Common myeloid progenitor, CD34-positive (primary cell): ENCODE measurements at regions of chr2 and their contacts with region 1.

Region 1: DNA sequence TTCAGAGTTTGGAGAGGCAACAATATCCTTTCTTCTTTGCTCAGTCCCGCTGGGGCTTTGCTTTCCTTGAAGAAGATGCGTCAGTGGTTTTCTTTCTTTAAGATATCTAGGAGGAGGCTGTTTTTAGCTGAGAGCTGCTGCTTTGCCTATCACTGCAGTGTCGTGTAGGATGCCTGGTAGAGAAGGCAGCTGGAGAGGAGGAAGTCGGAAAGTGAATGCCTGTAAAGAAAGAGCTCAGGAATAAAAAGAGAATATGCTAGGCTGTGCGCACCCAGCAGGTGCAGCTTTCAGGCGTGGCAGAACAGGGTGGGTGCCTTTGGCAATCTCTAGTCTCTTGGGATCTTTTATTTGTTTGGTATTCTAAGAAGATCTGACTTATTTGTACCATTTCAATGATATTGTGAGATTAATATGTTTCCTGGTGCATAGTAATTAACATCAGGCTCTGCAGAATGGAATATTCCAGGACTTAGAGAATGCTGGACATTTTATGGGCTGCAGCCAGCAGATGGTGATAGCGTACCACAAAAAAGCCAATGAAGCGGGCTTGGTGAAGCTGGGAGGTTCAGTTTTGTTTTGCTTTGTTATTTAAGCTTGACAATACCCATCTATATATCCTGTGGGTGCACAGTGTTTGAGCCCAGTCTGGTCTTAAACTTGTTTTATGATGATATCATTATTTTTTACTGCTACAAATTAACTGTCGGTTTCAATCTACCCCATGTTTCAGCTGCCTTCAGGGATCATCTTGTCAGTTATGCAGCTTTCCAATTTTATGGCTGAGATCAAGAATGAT is 34.9 kb downstream of the CAVIN2 start:
- DNase-seq: peak; percentile 66 to 85 (median 76)
- H3K4me3 ChIP-seq: no peak overlapping the region
- H3K27ac ChIP-seq: no peak overlapping the region
- H3K4me1 ChIP-seq: peaks cover 0 to 3% (median 0%) of the 10 kb centered on the region in 4 experiments
- H3K27me3 ChIP-seq: no peaks in the 10 kb centered on the region

Region 2: DNA sequence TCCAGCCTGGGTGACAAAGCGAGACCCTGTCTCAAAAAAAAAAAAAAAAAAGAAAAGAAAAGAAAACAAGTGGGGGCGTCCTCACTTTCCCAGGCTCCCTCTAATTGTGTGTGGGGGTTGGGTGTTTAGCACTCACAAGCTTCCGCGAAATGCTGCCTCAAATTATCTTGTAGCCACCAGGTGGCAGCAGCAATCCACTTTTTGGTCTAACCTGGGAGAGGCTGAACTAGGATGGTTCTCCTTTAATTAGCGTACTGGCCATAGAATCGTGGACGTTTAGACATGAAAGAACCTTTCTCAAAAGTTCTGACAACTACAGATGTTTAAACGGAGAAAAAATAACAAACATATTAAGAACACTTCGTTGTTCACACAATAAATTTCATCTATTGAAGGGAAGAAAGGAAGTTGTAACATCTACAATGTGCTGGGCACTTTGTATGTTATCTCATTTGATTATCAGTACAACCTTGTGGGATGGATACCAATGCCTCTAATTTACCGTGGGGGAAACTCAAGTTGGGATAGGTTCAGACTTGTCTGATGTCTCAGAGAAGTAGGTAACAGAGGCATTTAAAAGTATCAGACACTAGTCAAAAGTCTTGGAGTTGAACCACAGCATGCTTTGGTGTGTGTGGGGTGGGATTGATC is 256.8 kb before region 1 on chr2:
- CTCF ChIA-PET with region 1: interaction called, 12 read pairs
- POLR2A ChIA-PET with region 1: no interaction called
- DNase-seq: peak; percentile 81 to 89 (median 83)
- H3K4me3 ChIP-seq: peak overlapping the region in 1 of 7 experiments; percentile 57
- H3K27ac ChIP-seq: no peak overlapping the region
- H3K4me1 ChIP-seq: peaks cover 0 to 3% (median 1%) of the 10 kb centered on the region in 4 experiments
- H3K27me3 ChIP-seq: no peaks in the 10 kb centered on the region

Region 3: GRCh38 chr2:191625016-191625415 is 187.0 kb before region 1 on chr2:
- CTCF ChIA-PET with region 1: no interaction called
- POLR2A ChIA-PET with region 1: no interaction called
- DNase-seq: peak; percentile 12 to 66 (median 51)
- H3K4me3 ChIP-seq: no peak overlapping the region
- H3K27ac ChIP-seq: no peak overlapping the region
- H3K4me1 ChIP-seq: peaks cover 6 to 36% (median 19%) of the 10 kb centered on the region in 4 experiments
- H3K27me3 ChIP-seq: no peaks in the 10 kb centered on the region

Region 4: DNA sequence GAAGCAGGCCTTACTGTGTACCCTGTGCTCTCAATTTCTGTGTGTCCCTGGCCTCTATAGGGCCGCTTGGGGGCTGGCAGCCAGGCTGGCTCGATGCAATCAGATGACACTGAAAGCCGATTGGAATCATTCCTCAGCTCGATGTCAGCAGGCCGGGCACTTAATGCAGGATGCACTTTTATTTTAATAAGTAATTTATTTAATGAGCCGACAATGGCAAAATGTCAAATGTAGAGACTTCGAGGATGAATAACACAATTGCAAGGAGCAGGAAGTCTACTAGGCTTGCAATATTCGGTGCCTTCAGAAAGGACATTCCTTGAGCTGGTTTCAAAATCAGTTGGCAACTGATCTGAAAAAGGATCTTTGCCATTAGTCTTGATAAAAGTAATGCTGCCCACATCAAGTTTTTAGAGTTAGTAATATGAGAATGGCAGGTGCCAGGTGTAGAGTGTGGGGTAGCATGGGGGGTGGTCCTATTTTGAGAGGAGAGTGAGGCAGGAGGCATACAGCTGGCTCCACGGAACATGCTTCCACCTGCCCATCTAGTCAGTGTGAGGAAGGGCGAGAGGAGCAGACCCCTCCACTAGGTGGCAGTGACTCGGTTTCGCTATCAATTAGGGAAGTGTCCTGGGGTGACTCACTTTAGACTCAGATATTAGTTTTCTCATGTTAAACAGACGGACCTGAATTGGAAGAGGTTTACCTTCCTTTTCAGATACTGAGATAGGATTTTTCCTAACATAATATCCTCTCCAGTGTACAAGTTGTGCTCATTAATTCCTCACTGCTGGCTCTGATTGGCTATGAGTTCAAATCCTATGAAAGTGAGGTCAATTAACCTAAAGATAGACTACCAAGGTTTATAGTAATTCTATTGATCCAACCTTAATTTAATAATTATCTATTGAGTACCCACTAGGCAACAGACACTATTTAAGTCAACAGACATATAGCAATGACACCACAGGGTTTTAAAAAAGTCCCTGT is 53.2 kb before region 1 on chr2:
- CTCF ChIA-PET with region 1: interaction called, 12 read pairs
- POLR2A ChIA-PET with region 1: no interaction called
- DNase-seq: peak; percentile 82 to 90 (median 89)
- H3K4me3 ChIP-seq: peak overlapping the region in 1 of 7 experiments; percentile 14
- H3K27ac ChIP-seq: no peak overlapping the region
- H3K4me1 ChIP-seq: no peaks in the 10 kb centered on the region
- H3K27me3 ChIP-seq: no peaks in the 10 kb centered on the region

Region 5: GRCh38 chr2:191800874-191801273 is 11.1 kb before region 1 on chr2:
- CTCF ChIA-PET with region 1: interaction called, 18 read pairs
- POLR2A ChIA-PET with region 1: no interaction called
- DNase-seq: no peak
- H3K4me3 ChIP-seq: no peak overlapping the region
- H3K27ac ChIP-seq: no peak overlapping the region
- H3K4me1 ChIP-seq: no peaks in the 10 kb centered on the region
- H3K27me3 ChIP-seq: no peaks in the 10 kb centered on the region

Region 6: DNA sequence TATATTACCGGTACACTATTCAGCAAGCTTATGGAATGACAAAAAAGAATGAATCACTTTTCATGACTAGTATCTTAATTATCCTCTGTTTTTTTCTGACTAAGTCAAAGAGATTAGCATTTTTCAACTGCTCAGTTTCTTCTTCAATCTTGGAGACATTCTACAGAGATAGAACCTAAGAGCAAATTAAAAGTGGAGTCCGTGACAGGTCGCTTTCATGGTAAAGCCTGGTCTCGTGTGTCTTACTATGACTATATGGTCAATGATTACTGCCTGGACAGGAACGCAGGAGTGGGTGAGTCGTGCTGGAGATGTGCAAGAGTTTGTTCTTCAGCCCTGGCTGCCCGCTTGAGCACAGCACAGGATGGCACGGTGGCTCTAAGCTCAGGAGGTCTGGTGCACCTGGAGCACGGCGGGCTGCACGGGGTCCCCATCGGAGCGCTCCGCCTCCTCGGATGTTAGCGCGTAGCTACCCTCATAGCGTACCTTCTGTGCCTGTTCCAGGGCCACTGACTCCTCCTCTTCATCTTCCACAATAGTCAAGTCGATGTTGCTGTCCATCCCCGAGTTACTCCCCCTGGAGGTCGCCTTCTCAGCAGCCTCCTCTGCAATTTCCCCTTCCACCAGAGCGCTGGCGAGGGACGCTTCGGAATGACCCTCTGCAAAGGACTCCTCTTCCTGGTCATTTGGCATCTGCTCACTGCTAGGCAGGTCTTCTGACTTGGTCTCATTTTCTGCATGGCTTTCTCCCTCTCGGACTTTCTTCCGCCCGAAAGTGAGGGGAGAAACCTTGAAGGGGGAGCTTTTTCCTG is 23.7 kb after region 1 on chr2:
- CTCF ChIA-PET with region 1: interaction called, 14 read pairs
- POLR2A ChIA-PET with region 1: no interaction called
- DNase-seq: no peak
- H3K4me3 ChIP-seq: no peak overlapping the region
- H3K27ac ChIP-seq: peak overlapping the region in 1 of 2 experiments; percentile 86
- H3K4me1 ChIP-seq: peaks cover 13 to 58% (median 37%) of the 10 kb centered on the region in 4 experiments
- H3K27me3 ChIP-seq: no peaks in the 10 kb centered on the region

Region 7: DNA sequence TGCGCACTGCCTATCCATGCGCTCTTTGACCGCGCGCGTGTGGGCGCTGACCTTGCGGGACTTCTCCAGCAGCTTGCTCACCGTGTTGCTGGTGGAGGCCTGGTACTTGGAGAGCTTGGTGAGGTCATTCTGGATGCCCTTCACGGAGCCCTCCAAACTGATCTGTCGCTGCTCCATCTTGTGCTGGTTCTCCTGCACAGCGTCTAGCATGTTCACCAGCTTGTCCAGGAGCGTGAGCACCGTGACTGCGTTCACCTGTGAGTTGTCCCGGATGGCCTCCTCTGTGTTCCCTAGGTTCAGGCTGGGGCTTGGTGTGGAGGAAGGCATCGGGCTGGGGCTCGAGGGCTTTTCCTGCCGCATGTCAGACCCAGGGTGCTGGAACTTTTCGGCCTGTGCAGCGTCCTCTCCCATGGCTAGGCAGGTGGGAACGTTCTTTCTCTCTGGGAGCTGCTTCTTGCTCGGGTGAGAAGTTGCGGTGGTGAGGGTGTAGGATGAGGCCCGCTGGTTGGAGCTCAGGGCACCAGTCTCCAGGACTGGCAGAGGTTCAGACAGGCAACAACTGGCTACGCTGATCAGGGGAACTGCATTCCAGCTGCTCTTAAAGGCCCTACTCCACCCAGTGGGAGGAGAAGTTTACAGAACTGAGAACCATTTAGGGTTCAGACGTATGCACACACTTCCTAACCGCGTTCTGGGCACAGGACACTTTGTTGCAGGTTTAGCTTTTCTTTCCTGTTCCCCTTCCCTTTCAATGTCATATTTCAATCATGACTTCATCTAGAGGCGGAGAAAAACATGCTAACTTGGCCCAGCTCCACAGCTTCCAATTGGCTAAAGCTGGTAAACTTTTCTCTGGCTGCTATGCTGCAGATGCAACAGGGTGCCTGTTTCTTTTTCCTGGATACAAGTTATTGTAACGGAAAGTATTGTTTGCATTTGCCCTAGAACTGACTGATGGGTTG is 34.8 kb after region 1 on chr2 and contains the start of gene CAVIN2:
- CTCF ChIA-PET with region 1: interaction called, 14 read pairs
- POLR2A ChIA-PET with region 1: no interaction called
- DNase-seq: peak; percentile 78 to 95 (median 93)
- H3K4me3 ChIP-seq: peak within 1 kb of the TSS; percentile 71 to 94 (median 84)
- H3K27ac ChIP-seq: peak within 1 kb of the TSS; percentile 59 to 82
- H3K4me1 ChIP-seq: peaks cover 15 to 69% (median 41%) of the 10 kb centered on the region in 4 experiments
- H3K27me3 ChIP-seq: no peaks in the 10 kb centered on the region

Region 8: DNA sequence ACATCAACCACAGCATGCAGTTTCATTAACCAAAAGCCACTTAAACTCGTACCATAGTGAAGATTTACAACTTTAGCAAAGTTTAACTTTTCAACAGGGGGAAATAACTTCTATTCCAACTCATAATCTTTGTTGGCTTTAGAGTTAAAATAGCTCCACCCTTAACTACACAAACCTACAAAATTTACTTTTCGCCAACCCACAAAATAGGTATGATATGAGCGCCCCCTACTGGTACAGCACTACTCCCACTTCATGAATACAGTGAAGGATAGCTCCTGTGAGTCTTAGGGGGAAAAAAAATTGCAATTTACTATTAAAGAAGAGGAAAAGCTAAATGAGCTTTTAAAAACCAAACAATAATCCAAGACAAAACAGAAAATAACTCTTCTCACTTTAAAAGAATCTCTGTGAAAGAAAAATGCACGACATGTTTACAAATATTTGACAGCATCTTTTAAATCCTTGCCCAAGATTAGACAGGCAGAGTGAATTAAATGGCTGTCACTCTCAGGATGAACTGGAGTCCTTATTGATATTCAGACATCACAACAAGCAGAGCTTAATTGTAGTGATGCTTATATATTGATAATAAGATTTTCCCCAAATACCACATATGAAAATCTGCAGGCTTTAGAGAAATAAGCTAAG is 350.5 kb after region 1 on chr2:
- CTCF ChIA-PET with region 1: interaction called, 195 read pairs
- POLR2A ChIA-PET with region 1: no interaction called
- DNase-seq: peak; percentile 71 to 87 (median 80)
- H3K4me3 ChIP-seq: peak overlapping the region in 4 of 7 experiments; percentile 13 to 62 (median 24)
- H3K27ac ChIP-seq: no peak overlapping the region
- H3K4me1 ChIP-seq: peaks cover 0 to 12% (median 9%) of the 10 kb centered on the region in 4 experiments
- H3K27me3 ChIP-seq: no peaks in the 10 kb centered on the region